Activated CD4-positive, alpha-beta memory T cell treated with anti-CD3 and anti-CD28 coated beads for 36 hours (primary cell): ENCODE measurements at regions of chr12 and their contacts with region 1.

Region 1: GRCh38 chr12:57280211-57281062 is 29.4 kb upstream of the STAC3 start:
- DNase-seq: peak; percentile 89
- H3K4me3 Mint-ChIP-seq: peak overlapping the region; percentile 71
- H3K27ac Mint-ChIP-seq: peak overlapping the region; percentile 96
- H3K4me1 Mint-ChIP-seq: peaks cover 16% of the 10 kb centered on the region
- H3K27me3 Mint-ChIP-seq: no peaks in the 10 kb centered on the region

Region 2: DNA sequence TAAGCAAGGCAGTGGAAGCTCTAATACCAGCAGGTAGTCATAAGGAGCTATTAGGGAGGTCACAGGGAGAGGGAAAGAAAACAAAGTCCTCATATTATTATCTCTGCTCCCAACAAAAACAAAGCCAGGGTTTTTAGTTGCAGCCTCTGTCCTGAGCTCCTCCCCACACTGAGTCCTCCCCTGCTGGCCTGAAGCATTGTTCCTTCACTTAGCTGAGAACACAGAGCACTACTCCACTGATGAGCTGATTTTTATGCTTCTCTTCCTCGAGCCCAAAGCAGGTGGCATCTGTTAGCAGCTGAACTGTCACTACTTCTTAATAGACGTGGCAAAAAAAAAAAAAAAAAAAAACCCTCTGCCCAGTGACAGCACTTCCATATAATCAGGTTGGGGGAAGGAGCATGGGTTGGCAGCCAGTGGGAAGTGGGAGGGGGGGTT is 19.0 kb before region 1 on chr12:
- CTCF ChIA-PET with region 1: interaction called, 6 read pairs
- POLR2A ChIA-PET with region 1: no interaction called
- intact Hi-C with region 1: loop called (anchors 2 kb)
- DNase-seq: no peak
- H3K4me3 Mint-ChIP-seq: no peak overlapping the region
- H3K27ac Mint-ChIP-seq: no peak overlapping the region
- H3K4me1 Mint-ChIP-seq: peaks cover 4% of the 10 kb centered on the region
- H3K27me3 Mint-ChIP-seq: no peaks in the 10 kb centered on the region

Region 3: GRCh38 chr12:57430931-57431720 is 150.7 kb after region 1 on chr12 and contains the start of gene R3HDM2:
- CTCF ChIA-PET with region 1: no interaction called
- POLR2A ChIA-PET with region 1: no interaction called
- intact Hi-C with region 1: loop called (anchors 1 kb)
- DNase-seq: peak; percentile 97
- H3K4me3 Mint-ChIP-seq: peak within 1 kb of the TSS; percentile 97
- H3K27ac Mint-ChIP-seq: peak within 1 kb of the TSS; percentile 99
- H3K4me1 Mint-ChIP-seq: peaks cover 37% of the 10 kb centered on the region
- H3K27me3 Mint-ChIP-seq: no peaks in the 10 kb centered on the region
- total RNA-seq, gene R3HDM2: 42.2 to 51.4 TPM